K562 (cell line): ENCODE measurements at regions of chr5 and their contacts with region 1.

Region 1: GRCh38 chr5:79514391-79515105 is 614 bp upstream of the HOMER1 start:
- DNase-seq: peak; percentile 91 to 97 (median 92)
- ATAC-seq: peak; percentile 82
- H3K4me3 ChIP-seq: peak overlapping the region; percentile 62
- H3K27ac ChIP-seq: peak overlapping the region; percentile 95
- H3K4me1 ChIP-seq: peaks cover 8 to 18% of the 10 kb centered on the region in 2 experiments; a peak in 3 of 5 replicates
- H3K27me3 ChIP-seq: no peaks in the 10 kb centered on the region
- CTCF ChIP-seq: no peak
- EP300 ChIP-seq: peak; percentile 25
- POLR2A ChIP-seq: peak; percentile 90
- RAD21 ChIP-seq: 0 out of 4 replicates have a peak, but pooled peaks of 1 of the 2 experiments have one; percentile 7

Region 2: GRCh38 chr5:79202076-79202475 is 312.5 kb before region 1 on chr5:
- CTCF ChIA-PET with region 1: no interaction called
- POLR2A ChIA-PET with region 1: no interaction called
- in situ Hi-C with region 1: no loop called
- intact Hi-C with region 1: no loop called
- DNase-seq: no peak
- ATAC-seq: no peak
- H3K4me3 ChIP-seq: no peak overlapping the region
- H3K27ac ChIP-seq: no peak overlapping the region
- H3K4me1 ChIP-seq: no peaks in the 10 kb centered on the region
- H3K27me3 ChIP-seq: peaks cover 0 to 6% of the 10 kb centered on the region in 2 experiments; a peak in 1 of 5 replicates
- CTCF ChIP-seq: no peak
- EP300 ChIP-seq: no peak
- POLR2A ChIP-seq: no peak
- RAD21 ChIP-seq: no peak

Region 3: DNA sequence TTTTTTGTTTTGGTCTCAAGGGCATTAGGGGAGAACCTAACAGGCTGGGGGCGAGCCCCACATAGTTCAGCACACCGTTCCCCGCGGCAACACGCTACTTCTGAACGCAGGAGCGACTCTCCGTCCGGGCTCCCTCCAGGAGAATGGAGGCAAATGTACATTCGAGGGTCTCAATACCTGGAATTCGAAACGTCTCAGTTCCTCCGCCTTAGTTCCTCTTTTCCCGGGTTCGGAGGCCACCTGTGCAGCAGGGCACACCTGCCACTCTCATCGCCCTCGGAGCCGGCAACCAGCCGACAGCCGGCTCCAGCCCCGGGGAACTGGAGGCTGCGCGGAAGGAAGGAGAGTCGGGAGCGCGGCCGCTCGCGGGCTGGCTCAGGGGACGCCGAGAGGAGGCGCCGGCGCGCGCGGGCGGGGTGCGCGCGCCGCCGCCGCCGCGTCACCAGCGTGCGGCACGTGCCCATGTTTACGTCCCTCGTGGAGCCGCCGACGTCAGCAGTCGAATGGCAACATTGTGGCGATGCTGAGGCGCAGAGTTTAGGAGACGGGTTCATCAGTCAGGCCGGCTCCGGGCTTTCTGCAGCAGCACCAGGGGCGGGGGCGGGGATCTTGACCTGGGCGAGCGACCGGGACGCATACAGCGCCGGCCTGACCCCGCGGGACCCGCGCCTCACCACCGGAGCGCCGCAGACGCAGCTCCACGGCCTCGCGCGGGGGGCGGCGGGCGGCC is 278.7 kb before region 1 on chr5 and contains the start of gene JMY:
- CTCF ChIA-PET with region 1: no interaction called
- POLR2A ChIA-PET with region 1: no interaction called
- in situ Hi-C with region 1: no loop called
- intact Hi-C with region 1: loop called (anchors 5 kb)
- DNase-seq: peak; percentile 90
- ATAC-seq: peak; percentile 81
- H3K4me3 ChIP-seq: peak within 1 kb of the TSS; percentile 52
- H3K27ac ChIP-seq: peak within 1 kb of the TSS; percentile 73
- H3K4me1 ChIP-seq: peaks cover 0 to 20% of the 10 kb centered on the region in 2 experiments; a peak in 3 of 5 replicates
- H3K27me3 ChIP-seq: no peaks in the 10 kb centered on the region
- CTCF ChIP-seq: no peak
- EP300 ChIP-seq: no peak
- POLR2A ChIP-seq: peak; percentile 92
- RAD21 ChIP-seq: peak in 1 of 2 experiments; percentile 3; a peak in 1 of 4 replicates
- polyA plus RNA-seq, gene JMY: 1.1 TPM

Region 4: GRCh38 chr5:79357398-79357797 is 157.2 kb before region 1 on chr5:
- CTCF ChIA-PET with region 1: no interaction called
- POLR2A ChIA-PET with region 1: no interaction called
- in situ Hi-C with region 1: no loop called
- intact Hi-C with region 1: no loop called
- DNase-seq: no peak
- ATAC-seq: no peak
- H3K4me3 ChIP-seq: no peak overlapping the region
- H3K27ac ChIP-seq: no peak overlapping the region
- H3K4me1 ChIP-seq: no peaks in the 10 kb centered on the region
- H3K27me3 ChIP-seq: no peaks in the 10 kb centered on the region
- CTCF ChIP-seq: no peak
- EP300 ChIP-seq: no peak
- POLR2A ChIP-seq: no peak
- RAD21 ChIP-seq: no peak

Region 5: GRCh38 chr5:79499640-79500273 is 14.8 kb before region 1 on chr5:
- CTCF ChIA-PET with region 1: no interaction called
- POLR2A ChIA-PET with region 1: interaction called, 39 read pairs
- in situ Hi-C with region 1: no loop called
- intact Hi-C with region 1: no loop called
- DNase-seq: no peak
- ATAC-seq: no peak
- H3K4me3 ChIP-seq: no peak overlapping the region
- H3K27ac ChIP-seq: no peak overlapping the region
- H3K4me1 ChIP-seq: no peaks in the 10 kb centered on the region
- H3K27me3 ChIP-seq: no peaks in the 10 kb centered on the region
- CTCF ChIP-seq: no peak
- EP300 ChIP-seq: no peak
- POLR2A ChIP-seq: no peak
- RAD21 ChIP-seq: no peak

Region 6: GRCh38 chr5:79573983-79574890 is 59.7 kb after region 1 on chr5:
- CTCF ChIA-PET with region 1: no interaction called
- POLR2A ChIA-PET with region 1: no interaction called
- in situ Hi-C with region 1: no loop called
- intact Hi-C with region 1: loop called (anchors 2 kb)
- DNase-seq: no peak
- ATAC-seq: no peak
- H3K4me3 ChIP-seq: no peak overlapping the region
- H3K27ac ChIP-seq: no peak overlapping the region
- H3K4me1 ChIP-seq: peaks cover 3 to 14% of the 10 kb centered on the region in 2 experiments; a peak in 4 of 5 replicates
- H3K27me3 ChIP-seq: no peaks in the 10 kb centered on the region
- CTCF ChIP-seq: no peak
- EP300 ChIP-seq: no peak
- POLR2A ChIP-seq: no peak
- RAD21 ChIP-seq: no peak

Region 7: GRCh38 chr5:79612667-79613198 is 98.2 kb after region 1 on chr5:
- CTCF ChIA-PET with region 1: no interaction called
- POLR2A ChIA-PET with region 1: no interaction called
- in situ Hi-C with region 1: no loop called
- intact Hi-C with region 1: loop called (anchors 5 kb)
- DNase-seq: no peak
- ATAC-seq: peak; percentile 51
- H3K4me3 ChIP-seq: peak overlapping the region; percentile 90
- H3K27ac ChIP-seq: peak overlapping the region; percentile 96
- H3K4me1 ChIP-seq: 0 out of 5 replicates have a peak, but pooled peaks cover 0 to 3% of the 10 kb centered on the region in 2 experiments
- H3K27me3 ChIP-seq: no peaks in the 10 kb centered on the region
- CTCF ChIP-seq: no peak
- EP300 ChIP-seq: no peak
- POLR2A ChIP-seq: no peak
- RAD21 ChIP-seq: no peak